HepG2 (cell line): ENCODE measurements at regions of chr14 and their contacts with region 1.

Region 1: DNA sequence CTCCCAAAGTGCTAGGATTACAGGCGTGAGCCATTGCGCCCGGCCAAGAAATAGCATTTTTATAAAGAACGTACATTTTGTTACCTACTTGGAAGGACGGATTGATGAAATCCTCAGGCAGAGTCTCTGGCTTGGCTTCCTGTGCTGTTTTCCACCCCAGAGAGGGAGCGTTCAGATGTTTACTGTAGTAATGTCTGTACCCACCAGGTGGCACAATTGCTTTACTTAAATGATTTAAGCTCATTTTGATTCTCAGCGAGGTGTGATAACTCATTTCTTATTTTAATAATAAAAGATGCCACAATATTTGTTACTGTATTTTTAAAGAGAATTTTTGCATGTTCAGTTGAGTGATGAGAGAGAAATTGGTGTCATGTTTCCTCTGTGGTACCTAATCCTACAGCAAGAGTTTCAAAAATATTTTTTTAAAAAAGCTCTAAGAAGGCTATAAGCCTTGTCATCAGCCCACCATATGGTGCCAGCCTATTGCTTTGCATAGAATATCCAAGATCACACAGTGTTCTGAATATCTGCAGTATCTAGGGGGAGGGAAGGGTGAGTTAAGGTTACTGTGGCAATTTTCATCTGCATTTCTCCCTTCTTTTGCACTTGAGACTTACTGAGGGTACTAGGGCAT is 82.6 kb upstream of the TRAF3 start:
- DNase-seq: peak; percentile 70
- ATAC-seq: peak; percentile 27; the same call in 2 of the 3 replicates
- H3K4me3 ChIP-seq: no peak overlapping the region
- H3K27ac ChIP-seq: no peak overlapping the region
- H3K4me1 ChIP-seq: peaks cover 74% of the 10 kb centered on the region
- H3K27me3 ChIP-seq: no peaks in the 10 kb centered on the region
- CTCF ChIP-seq: peak; percentile 75
- EP300 ChIP-seq: no peak
- POLR2A ChIP-seq: no peak
- RAD21 ChIP-seq: peak; percentile 56; the same call in 1 of the 2 replicates

Region 2: GRCh38 chr14:102746634-102747438 is 52.2 kb after region 1 on chr14:
- CTCF ChIA-PET with region 1: no interaction called
- POLR2A ChIA-PET with region 1: no interaction called
- in situ Hi-C with region 1: no loop called
- intact Hi-C with region 1: no loop called
- DNase-seq: no peak
- ATAC-seq: no peak; the same call in 2 of the 3 replicates
- H3K4me3 ChIP-seq: no peak overlapping the region
- H3K27ac ChIP-seq: no peak overlapping the region
- H3K4me1 ChIP-seq: no peaks in the 10 kb centered on the region
- H3K27me3 ChIP-seq: no peaks in the 10 kb centered on the region
- CTCF ChIP-seq: no peak
- EP300 ChIP-seq: no peak
- POLR2A ChIP-seq: no peak
- RAD21 ChIP-seq: no peak

Region 3: GRCh38 chr14:102764220-102764671 is 69.6 kb after region 1 on chr14:
- CTCF ChIA-PET with region 1: no interaction called
- POLR2A ChIA-PET with region 1: no interaction called
- in situ Hi-C with region 1: no loop called
- intact Hi-C with region 1: no loop called
- DNase-seq: no peak
- ATAC-seq: peak; percentile 17; the same call in 1 of the 3 replicates
- H3K4me3 ChIP-seq: no peak overlapping the region
- H3K27ac ChIP-seq: no peak overlapping the region
- H3K4me1 ChIP-seq: peaks cover 14% of the 10 kb centered on the region
- H3K27me3 ChIP-seq: peaks cover 6 to 14% of the 10 kb centered on the region in 2 experiments; a peak in 4 of 5 replicates
- CTCF ChIP-seq: no peak
- EP300 ChIP-seq: no peak
- POLR2A ChIP-seq: no peak
- RAD21 ChIP-seq: no peak

Region 4: GRCh38 chr14:102917469-102918211 is 223.0 kb after region 1 on chr14:
- CTCF ChIA-PET with region 1: no interaction called
- POLR2A ChIA-PET with region 1: no interaction called
- in situ Hi-C with region 1: loop called (anchors 10 kb)
- intact Hi-C with region 1: loop called (anchors 5 kb)
- DNase-seq: peak; percentile 24
- ATAC-seq: peak; percentile 4
- H3K4me3 ChIP-seq: no peak overlapping the region
- H3K27ac ChIP-seq: no peak overlapping the region
- H3K4me1 ChIP-seq: peaks cover 29% of the 10 kb centered on the region
- H3K27me3 ChIP-seq: no peaks in the 10 kb centered on the region
- CTCF ChIP-seq: peak; percentile 89
- EP300 ChIP-seq: no peak
- POLR2A ChIP-seq: no peak
- RAD21 ChIP-seq: peak; percentile 72

Region 5: DNA sequence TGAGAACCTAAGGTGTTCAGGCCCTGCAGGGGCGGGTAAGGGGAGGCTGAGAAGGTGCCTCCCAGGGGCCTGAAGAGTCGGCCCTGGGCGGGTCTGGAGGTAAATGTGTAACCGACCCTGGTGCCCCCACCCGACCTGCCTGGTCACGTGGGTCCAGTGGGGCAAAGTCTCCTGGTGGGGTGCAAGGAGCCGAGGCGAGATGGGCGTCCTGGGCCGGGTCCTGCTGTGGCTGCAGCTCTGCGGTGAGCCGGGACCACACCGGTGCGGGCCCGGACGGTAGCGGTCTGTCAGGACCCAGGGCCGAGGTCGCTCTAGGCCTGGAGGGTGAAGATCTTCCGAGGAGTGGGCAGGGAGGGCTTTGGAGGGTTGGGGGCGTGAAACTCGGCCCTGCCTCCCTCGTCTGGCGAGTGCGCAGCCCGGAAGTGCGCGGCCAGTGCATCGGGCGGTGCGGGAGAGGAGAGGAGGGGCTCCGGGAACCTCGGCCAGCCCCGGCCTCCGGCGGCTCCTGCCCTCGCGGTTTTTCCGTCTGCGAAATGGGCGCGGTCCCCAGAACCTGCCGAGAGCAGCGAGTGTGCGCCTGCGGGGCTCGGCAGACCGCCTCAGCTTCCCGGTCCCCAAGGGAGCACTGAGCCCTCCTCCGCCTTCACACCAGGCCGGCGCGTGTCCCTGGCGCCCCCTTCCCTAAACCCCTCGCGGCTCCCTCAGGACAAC is 228.0 kb after region 1 on chr14 and contains the start of gene AMN:
- CTCF ChIA-PET with region 1: no interaction called
- POLR2A ChIA-PET with region 1: no interaction called
- in situ Hi-C with region 1: loop called (anchors 10 kb)
- intact Hi-C with region 1: loop called (anchors 5 kb)
- DNase-seq: peak; percentile 64
- ATAC-seq: peak; percentile 82
- H3K4me3 ChIP-seq: peak within 1 kb of the TSS; percentile 90 to 94 (median 92)
- H3K27ac ChIP-seq: peak within 1 kb of the TSS; percentile 74
- H3K4me1 ChIP-seq: peaks cover 27% of the 10 kb centered on the region
- H3K27me3 ChIP-seq: no peaks in the 10 kb centered on the region
- CTCF ChIP-seq: peak; percentile 38
- EP300 ChIP-seq: peak in 1 of 2 experiments; percentile 53; a peak in 1 of 4 replicates
- POLR2A ChIP-seq: peak; percentile 86 to 96
- RAD21 ChIP-seq: peak; percentile 39; the same call in 1 of the 2 replicates
- total RNA-seq, gene AMN: 8.2 and 33.1 TPM in 2 replicates